ENCODE measurements at regions of chr18 and their contacts with region 1.

Region 1: DNA sequence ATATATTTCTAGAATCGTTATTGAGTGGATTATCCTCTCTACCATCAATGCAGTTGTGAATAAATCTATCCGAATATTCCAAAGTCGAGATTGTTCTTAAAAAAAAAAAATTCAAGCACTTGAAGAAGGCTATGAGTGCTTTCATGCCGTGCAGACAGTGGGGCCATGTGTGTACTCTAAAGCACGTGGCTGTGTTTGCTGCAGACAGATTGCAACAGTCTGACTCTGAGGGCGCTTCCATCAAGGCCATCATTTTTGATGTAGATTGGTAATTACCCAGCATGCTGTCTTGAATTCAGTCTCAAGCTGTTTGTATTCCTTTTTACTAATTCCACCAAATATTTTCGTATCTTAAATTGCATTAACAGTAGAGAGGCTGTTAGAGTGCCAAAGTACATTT is 325.9 kb upstream of the LINC00305 start:
- DNase-seq: no peak
- ATAC-seq: no peak
- H3K4me3 ChIP-seq: no peak overlapping the region
- H3K27ac ChIP-seq: no peak overlapping the region
- H3K4me1 ChIP-seq: no peaks in the 10 kb centered on the region
- H3K27me3 ChIP-seq: no peaks in the 10 kb centered on the region
- CTCF ChIP-seq: no peak
- POLR2A ChIP-seq: no peak

Region 2: DNA sequence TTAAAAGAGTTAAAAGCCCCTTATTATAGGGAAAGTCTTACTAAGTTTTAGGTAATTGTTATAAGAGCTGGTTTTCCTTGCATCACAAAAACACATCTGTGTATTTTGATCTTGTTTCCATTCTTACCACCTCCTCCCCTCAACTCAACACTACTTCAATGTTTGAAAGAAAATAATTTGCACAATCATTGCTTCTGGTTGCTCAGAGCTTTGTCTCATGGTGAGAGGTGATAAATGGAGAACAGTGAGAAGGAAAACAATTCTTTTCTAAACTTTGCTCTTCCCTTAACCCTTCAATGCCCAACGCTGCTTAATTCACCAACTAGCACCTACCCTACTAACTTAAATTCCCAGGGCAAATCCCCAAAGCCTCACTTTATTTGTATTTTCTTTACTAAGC is 57.8 kb before region 1 on chr18:
- intact Hi-C with region 1: loop called in 1 of 10 experiments (anchors 10 kb)
- DNase-seq: no peak
- ATAC-seq: no peak
- H3K4me3 ChIP-seq: no peak overlapping the region
- H3K27ac ChIP-seq: no peak overlapping the region
- H3K4me1 ChIP-seq: no peaks in the 10 kb centered on the region
- H3K27me3 ChIP-seq: no peaks in the 10 kb centered on the region
- CTCF ChIP-seq: no peak
- POLR2A ChIP-seq: no peak